ENCODE measurements at regions of chr7 and their contacts with region 1.

Region 1: GRCh38 chr7:100563809-100564400 is 9.8 kb downstream of the SAP25 start:
- DNase-seq: peak; percentile 59 to 84
- H3K4me3 ChIP-seq: no peak overlapping the region
- H3K27ac ChIP-seq: no peak overlapping the region
- H3K4me1 ChIP-seq: no peaks in the 10 kb centered on the region
- H3K27me3 ChIP-seq: no peaks in the 10 kb centered on the region
- CTCF ChIP-seq: peak; percentile 85 to 92 (median 86)
- POLR2A ChIP-seq: no peak

Region 2: GRCh38 chr7:100358027-100358865 is 205.7 kb before region 1 on chr7 and contains the start of gene PILRB:
- intact Hi-C with region 1: no loop called
- DNase-seq: no peak
- H3K4me3 ChIP-seq: no peak within 1 kb of the TSS
- H3K27ac ChIP-seq: no peak within 1 kb of the TSS
- H3K4me1 ChIP-seq: no peaks in the 10 kb centered on the region
- H3K27me3 ChIP-seq: no peaks in the 10 kb centered on the region
- CTCF ChIP-seq: no peak
- POLR2A ChIP-seq: no peak
- total RNA-seq, gene PILRB: 33.8 to 100.0 (median 75.4) TPM

Region 3: GRCh38 chr7:100469227-100470044 is 94.5 kb before region 1 on chr7:
- intact Hi-C with region 1: loop called (anchors 5 kb)
- DNase-seq: peak; percentile 69 to 88
- H3K4me3 ChIP-seq: no peak overlapping the region
- H3K27ac ChIP-seq: peak overlapping the region; percentile 55 to 69
- H3K4me1 ChIP-seq: peaks cover 7 to 18% of the 10 kb centered on the region in 2 donors
- H3K27me3 ChIP-seq: no peaks in the 10 kb centered on the region
- CTCF ChIP-seq: peak; percentile 93 to 98 (median 96)
- POLR2A ChIP-seq: no peak

Region 4: GRCh38 chr7:100553864-100554263 is 10.0 kb before region 1 on chr7:
- intact Hi-C with region 1: no loop called
- DNase-seq: no peak
- H3K4me3 ChIP-seq: no peak overlapping the region
- H3K27ac ChIP-seq: no peak overlapping the region
- H3K4me1 ChIP-seq: no peaks in the 10 kb centered on the region
- H3K27me3 ChIP-seq: no peaks in the 10 kb centered on the region
- CTCF ChIP-seq: no peak
- POLR2A ChIP-seq: no peak